Psoas muscle (tissue), 8 donors: ENCODE measurements at regions of chr3 and their contacts with region 1.

Region 1: DNA sequence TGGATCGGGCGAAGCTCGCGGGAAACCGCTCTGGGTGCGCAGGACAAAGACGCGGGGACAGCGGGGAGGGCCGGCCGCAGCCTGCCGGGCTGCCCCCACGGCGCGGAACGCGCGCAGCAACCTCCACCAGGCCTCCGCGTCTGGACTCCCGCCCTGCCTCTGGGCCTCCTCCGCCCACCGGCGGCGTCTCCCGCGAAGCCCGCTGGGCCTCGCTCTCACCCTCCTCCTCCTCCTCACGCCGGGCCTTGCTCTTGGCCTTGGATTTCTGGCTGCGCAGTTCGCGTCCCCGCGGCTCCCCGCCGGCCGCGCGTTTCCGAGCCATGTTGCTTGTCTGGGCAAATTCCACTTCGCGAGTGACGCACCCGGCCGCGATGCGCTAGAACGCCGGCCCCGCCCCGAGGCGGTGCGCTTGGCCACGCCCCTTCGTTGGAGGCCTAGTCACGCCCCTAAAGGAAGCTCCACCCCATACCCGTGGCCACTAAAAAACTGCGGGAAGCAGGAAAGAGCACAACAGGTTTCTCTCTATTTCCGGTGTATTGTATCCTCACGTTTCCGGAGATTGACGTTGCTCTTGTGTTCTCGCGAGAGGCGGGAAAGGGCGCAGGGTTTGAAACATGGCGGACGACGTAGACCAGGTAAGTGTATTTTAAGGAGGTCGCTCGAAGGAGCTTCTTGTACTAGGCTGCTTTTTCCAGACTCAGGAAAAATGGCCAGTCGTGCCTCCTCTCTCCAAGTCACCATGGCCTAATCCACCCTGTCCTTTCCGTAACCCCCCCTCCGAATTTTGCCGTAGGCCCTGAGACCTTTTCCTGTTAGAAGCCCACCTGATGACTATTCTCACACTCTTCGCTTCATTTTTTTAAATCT is at the starts of genes LSM3 and XPC:
- DNase-seq: peak; percentile 97 to 98
- ATAC-seq: peak; percentile 98 to 100 (median 98)
- H3K4me3 ChIP-seq: peak within 1 kb of the TSS; percentile 91
- H3K27ac ChIP-seq: peak within 1 kb of the TSS; percentile 96
- H3K4me1 ChIP-seq: peaks cover 18% of the 10 kb centered on the region
- H3K27me3 ChIP-seq: no peaks in the 10 kb centered on the region
- CTCF ChIP-seq: no peak
- total RNA-seq, gene LSM3: 11.1 to 14.9 (median 13.2) TPM
- total RNA-seq, gene XPC: 15.1 to 19.5 (median 16.8) TPM

Region 2: DNA sequence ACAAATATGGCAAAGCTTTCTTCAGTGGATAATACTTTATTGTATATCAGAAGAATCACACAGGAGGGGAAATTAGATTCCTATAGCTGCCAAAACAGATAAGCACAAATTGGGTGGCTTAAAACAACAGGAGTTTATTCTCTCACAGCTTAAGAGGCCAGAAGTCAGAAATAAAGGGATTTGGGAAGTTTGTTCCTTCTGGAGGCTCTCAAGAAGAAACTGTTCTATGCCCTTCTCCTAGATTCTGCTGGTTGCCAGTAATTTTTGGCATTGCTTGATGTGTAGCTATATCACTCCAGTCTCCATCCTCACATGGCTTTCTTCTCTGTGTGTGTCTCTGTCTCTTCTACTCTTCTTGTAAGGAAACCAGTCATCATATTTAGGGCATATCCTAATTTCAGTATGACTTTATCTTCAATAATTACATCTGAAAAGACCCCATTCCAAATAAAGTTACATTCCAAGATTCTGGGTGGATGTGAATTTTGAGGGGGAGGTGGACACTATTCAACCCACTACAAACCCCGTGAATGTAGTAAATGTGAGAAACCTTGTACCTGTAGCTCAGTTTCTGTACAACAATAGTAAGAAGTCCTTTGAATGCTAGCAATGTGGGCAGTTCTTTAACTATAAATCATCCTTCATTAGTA is 276.4 kb before region 1 on chr3:
- intact Hi-C with region 1: no loop called
- DNase-seq: no peak
- ATAC-seq: no peak
- H3K4me3 ChIP-seq: no peak overlapping the region
- H3K27ac ChIP-seq: no peak overlapping the region
- H3K4me1 ChIP-seq: no peaks in the 10 kb centered on the region
- H3K27me3 ChIP-seq: peaks cover 0 to 19% (median 0%) of the 10 kb centered on the region in 3 donors
- CTCF ChIP-seq: no peak

Region 3: DNA sequence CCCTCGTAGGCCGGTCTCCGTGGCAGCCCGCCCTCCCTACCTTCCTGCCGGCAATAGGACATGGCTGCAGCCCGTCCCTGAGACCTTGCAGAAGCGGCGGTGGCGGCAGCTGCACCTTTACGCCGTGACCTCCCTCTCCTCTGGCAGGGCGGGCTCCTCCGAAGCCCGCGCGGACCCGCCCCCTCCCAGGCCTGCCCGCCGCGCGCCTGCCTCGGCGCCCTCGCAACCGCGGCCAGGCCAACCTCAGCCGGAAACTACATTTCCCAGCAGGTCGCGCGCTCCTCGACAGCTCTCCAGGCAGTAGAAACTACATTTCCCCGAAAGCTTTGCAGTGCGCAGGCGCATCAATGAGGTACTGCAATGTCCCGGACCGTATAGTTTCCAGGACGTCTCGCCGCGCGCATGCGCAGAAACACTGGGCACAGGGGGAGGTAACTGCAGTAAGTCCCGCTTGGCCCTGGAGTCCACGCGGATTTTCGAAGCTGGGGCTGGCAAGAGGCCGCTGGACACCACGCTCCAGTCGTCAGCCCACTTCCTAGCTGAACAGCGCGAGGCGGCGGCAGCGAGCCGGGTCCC is 53.8 kb before region 1 on chr3 and contains the starts of genes CHCHD4 and TMEM43:
- intact Hi-C with region 1: loop called (anchors 2 to 5 kb)
- DNase-seq: peak; percentile 100
- ATAC-seq: peak; percentile 78 to 93 (median 85)
- H3K4me3 ChIP-seq: peak within 1 kb of the TSS; percentile 98
- H3K27ac ChIP-seq: peak within 1 kb of the TSS; percentile 97
- H3K4me1 ChIP-seq: peaks cover 30% of the 10 kb centered on the region
- H3K27me3 ChIP-seq: no peaks in the 10 kb centered on the region
- CTCF ChIP-seq: no peak
- total RNA-seq, gene CHCHD4: 18.5 to 26.8 (median 19.5) TPM
- total RNA-seq, gene TMEM43: 28.2 to 107 (median 34.2) TPM

Region 4: GRCh38 chr3:14144423-14145075 is 33.9 kb before region 1 on chr3:
- intact Hi-C with region 1: loop called in 1 of 2 experiments (anchors 5 kb)
- DNase-seq: no peak
- ATAC-seq: peak; percentile 68 to 84 (median 70)
- H3K4me3 ChIP-seq: peak overlapping the region; percentile 35
- H3K27ac ChIP-seq: peak overlapping the region; percentile 79
- H3K4me1 ChIP-seq: peaks cover 33% of the 10 kb centered on the region
- H3K27me3 ChIP-seq: no peaks in the 10 kb centered on the region
- CTCF ChIP-seq: no peak

Region 5: GRCh38 chr3:14154895-14155440 is 23.5 kb before region 1 on chr3:
- intact Hi-C with region 1: no loop called
- DNase-seq: no peak
- ATAC-seq: no peak
- H3K4me3 ChIP-seq: no peak overlapping the region
- H3K27ac ChIP-seq: no peak overlapping the region
- H3K4me1 ChIP-seq: peaks cover 13% of the 10 kb centered on the region
- H3K27me3 ChIP-seq: no peaks in the 10 kb centered on the region
- CTCF ChIP-seq: no peak

Region 6: DNA sequence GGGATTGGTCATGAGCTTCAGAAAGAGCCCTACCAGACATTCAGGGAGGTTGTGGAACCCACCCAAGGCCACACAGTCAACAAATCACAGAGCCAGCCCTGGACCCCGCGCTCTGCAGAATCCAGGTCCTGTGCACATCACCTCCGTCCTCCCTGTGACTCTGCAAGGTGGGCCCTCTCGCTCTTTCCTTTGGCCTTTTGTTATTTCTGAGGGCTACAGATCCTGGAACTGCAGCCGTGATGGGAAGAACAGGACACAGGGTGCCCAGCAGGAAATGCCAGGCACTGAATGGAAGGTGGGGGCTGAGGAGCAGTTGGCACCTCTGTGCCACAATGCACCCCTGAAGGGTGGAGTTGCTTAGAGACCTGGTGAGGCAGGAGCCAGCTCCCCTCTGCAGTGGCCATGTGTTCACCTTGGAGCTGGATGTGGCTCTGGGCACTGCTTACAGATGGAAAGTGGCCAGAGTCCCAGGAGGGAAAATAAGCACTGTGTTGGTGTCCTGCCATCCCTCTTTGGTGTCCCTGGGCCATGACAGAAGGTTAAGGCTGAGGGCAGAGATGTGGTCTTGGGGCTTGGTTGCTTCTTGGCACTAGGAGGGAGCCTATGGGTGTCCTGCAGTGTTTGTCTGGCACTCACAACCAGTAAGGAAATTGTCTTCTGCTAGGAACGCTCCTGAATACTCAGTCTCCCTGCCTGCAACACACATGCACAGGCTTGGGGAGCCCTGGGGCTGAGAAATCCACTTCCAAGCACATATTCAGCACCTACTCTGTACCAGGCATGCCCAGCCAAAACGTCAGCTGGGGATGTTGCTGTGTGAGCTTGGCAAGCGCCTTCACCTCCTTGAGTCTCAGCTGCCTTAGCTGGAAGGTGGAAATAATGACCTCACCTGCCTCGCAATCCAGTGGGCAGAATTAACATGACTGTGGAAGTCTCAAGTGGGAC is 125.9 kb after region 1 on chr3:
- intact Hi-C with region 1: no loop called
- DNase-seq: no peak
- ATAC-seq: peak; percentile 39 to 60 (median 54)
- H3K4me3 ChIP-seq: no peak overlapping the region
- H3K27ac ChIP-seq: peak overlapping the region; percentile 79
- H3K4me1 ChIP-seq: peaks cover 49% of the 10 kb centered on the region
- H3K27me3 ChIP-seq: no peaks in the 10 kb centered on the region
- CTCF ChIP-seq: no peak

Region 7: DNA sequence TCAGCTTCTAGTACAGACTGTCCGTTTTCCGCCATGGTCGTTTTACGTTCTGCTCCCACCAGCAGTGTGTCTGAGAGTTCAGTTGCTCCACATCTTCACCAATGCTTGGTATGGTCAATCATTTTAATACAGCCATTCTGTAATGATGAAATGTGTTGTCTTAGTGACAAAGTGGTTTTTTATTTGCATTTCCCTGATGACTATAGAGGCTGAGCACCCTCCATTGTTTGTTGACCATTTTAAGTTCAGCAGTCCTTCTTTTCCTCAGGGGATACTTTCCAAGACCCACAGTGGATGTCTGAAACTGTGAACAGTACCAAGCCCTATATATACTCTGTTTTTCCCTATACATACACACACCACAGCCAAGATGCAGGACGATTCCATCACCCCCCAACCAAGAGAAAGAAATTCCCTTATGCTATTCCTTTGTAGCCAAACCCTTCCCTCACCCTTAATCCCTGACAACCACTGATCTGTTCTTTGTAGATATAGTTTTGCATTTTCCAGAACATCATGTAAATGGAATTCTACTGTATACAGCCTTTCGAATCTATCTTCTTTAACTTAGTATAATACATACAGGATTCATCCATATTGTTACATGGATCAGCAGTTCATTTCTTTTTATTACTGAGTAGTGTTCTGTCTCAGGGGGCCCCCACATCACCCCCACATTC is 552.4 kb after region 1 on chr3:
- intact Hi-C with region 1: no loop called
- DNase-seq: no peak
- ATAC-seq: no peak
- H3K4me3 ChIP-seq: no peak overlapping the region
- H3K27ac ChIP-seq: no peak overlapping the region
- H3K4me1 ChIP-seq: no peaks in the 10 kb centered on the region
- H3K27me3 ChIP-seq: no peaks in the 10 kb centered on the region
- CTCF ChIP-seq: no peak